ENCODE measurements at regions of chr4 and their contacts with region 1.

Region 1: DNA sequence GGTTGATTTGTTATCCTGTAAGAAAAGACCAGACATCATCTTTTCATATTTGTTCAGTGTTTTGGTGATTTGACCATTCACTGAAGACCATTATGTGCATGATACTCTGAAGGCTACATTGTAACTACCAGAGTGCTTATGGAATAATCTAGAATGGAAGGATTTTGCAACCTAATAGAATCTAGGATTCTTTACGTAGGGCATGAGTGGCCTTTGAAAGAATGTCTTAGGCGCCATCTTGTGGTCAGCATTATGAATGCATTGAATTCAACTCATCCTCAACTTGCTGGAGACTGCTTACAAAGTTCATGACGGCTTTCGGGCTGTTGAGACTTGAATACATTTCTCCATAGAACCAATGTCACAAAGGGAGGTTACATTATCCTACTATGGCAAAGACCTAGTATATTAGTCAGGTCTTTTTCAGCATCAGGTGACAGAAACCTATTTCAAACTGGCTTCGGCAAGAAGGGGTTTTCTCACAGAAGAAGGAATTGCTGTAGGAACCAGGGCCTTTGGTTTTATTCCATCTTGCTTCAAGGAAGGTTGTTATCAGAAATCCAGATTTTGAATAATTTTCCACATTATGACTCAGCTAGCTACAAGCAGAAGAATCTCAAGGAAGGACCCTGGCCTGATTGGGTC is 104.1 kb downstream of the GPAT3 start:
- DNase-seq: no peak
- ATAC-seq: peak; percentile 83

Region 2: GRCh38 chr4:83503974-83504373 is 136.0 kb before region 1 on chr4:
- intact Hi-C with region 1: loop called (anchors 2 kb)
- DNase-seq: no peak
- ATAC-seq: no peak

Region 3: DNA sequence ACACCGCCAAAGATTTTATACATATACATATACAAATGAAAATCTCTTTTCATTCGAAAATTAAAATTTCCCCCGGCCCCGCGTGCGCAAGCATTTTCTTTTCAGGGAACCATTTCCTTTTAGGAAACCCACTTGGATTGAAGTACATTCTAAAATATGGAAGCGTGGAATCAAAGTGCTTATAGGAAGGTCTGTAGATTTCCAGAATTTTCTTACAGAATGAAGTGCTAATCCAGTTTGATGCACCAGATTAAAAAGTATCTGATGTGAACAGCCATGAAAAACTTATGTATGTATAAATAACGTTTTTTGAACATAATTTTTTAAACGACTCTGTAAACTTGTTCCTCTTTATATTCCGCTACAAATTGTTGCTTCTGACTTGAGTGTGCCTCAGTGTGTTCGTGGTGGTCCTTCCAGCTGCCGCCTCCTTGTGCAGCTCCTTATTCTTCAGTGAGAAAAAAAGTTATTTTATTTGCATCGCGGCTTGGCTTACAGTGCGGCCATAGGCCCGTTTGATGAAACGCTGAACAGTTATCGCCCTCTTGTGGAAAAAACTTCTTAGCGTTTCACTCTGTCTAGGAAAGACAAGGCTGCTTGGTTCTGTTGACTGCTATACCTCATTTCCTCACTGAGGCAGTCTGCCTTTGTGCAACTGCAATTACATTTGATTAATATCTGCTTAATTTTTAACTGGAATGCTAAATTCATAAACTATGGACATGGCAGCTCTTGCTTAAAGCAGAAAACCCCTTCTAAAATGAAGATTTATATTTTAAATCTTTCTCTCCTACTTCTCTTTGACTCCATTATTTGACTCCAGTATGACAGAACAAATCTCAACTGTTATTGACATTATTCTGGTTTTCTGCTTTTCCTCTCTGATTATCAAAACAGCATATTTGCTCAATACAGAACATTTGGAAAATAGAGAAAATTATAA is 863.8 kb after region 1 on chr4:
- intact Hi-C with region 1: loop called (anchors 10 kb)
- DNase-seq: no peak
- ATAC-seq: peak; percentile 69